ENCODE measurements at regions of chr16 and their contacts with region 1.

Region 1: DNA sequence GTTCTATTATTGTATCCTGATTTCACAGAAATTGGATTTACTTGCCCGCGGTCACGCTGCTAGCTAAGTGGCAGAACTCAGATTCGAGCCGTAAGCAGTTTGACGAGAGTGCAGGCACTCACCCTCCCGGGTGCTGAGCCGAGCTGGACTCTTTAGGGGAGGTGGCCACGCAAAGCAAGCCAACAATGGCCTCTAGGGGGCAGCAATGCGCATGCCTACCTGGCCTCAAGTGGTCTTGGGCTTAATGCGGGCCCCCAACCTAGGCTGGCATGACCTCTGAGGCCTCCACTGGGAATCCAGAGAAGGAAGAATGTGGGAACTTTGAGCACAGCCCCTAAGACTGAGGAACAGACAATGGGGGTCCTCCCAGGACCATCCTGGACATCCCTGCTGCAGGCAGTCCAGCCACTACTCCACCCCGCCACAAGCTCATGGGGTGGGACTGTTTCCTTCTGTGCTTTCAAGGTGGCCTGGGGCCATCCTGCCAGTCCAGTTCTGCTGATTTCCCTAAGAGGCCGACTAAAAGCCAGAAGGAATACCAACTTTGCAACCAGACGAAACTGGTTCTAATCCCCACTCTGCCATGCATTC is 276.5 kb downstream of the XYLT1 start:
- DNase-seq: no peak
- ATAC-seq: no peak
- H3K4me3 ChIP-seq: no peak overlapping the region
- H3K27ac ChIP-seq: no peak overlapping the region
- H3K4me1 ChIP-seq: no peaks in the 10 kb centered on the region
- H3K27me3 ChIP-seq: no peaks in the 10 kb centered on the region
- CTCF ChIP-seq: peak; percentile 74

Region 2: GRCh38 chr16:17070882-17071592 is 123.2 kb before region 1 on chr16:
- CTCF ChIA-PET with region 1: no interaction called
- POLR2A ChIA-PET with region 1: no interaction called
- in situ Hi-C with region 1: loop called (anchors 25 kb)
- intact Hi-C with region 1: no loop called
- DNase-seq: no peak
- ATAC-seq: peak; percentile 45; the same call in 1 of the 2 replicates
- H3K4me3 ChIP-seq: no peak overlapping the region
- H3K27ac ChIP-seq: no peak overlapping the region
- H3K4me1 ChIP-seq: no peaks in the 10 kb centered on the region
- H3K27me3 ChIP-seq: peaks cover 14% of the 10 kb centered on the region
- CTCF ChIP-seq: no peak

Region 3: DNA sequence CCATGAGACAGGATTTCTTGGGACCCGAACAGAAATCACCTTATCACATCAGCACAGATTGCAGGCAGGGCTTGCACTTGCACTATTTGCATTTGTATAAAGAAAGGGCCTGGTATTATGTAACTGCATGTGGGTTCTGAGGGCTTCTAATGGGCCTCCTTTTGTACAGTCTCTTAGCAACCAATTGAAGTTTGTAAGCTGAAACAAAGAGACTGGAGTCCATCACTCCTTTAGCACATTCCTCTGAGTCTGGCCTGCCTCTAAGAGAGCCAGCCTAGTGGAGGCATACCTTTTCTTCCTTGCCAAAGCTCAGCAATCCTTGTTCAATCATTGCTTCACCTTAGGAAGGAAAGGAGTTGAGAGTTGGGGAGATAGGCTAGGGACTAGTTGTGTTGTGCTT is 110.7 kb before region 1 on chr16:
- CTCF ChIA-PET with region 1: no interaction called
- POLR2A ChIA-PET with region 1: no interaction called
- in situ Hi-C with region 1: no loop called
- intact Hi-C with region 1: no loop called
- DNase-seq: no peak
- ATAC-seq: no peak
- H3K4me3 ChIP-seq: no peak overlapping the region
- H3K27ac ChIP-seq: no peak overlapping the region
- H3K4me1 ChIP-seq: no peaks in the 10 kb centered on the region
- H3K27me3 ChIP-seq: peaks cover 3% of the 10 kb centered on the region; the same call in 1 of the 2 replicates
- CTCF ChIP-seq: no peak

Measured in Panc1 (cell line).